GM12878 (cell line): ENCODE measurements at regions of chr7 and their contacts with region 1.

Region 1: DNA sequence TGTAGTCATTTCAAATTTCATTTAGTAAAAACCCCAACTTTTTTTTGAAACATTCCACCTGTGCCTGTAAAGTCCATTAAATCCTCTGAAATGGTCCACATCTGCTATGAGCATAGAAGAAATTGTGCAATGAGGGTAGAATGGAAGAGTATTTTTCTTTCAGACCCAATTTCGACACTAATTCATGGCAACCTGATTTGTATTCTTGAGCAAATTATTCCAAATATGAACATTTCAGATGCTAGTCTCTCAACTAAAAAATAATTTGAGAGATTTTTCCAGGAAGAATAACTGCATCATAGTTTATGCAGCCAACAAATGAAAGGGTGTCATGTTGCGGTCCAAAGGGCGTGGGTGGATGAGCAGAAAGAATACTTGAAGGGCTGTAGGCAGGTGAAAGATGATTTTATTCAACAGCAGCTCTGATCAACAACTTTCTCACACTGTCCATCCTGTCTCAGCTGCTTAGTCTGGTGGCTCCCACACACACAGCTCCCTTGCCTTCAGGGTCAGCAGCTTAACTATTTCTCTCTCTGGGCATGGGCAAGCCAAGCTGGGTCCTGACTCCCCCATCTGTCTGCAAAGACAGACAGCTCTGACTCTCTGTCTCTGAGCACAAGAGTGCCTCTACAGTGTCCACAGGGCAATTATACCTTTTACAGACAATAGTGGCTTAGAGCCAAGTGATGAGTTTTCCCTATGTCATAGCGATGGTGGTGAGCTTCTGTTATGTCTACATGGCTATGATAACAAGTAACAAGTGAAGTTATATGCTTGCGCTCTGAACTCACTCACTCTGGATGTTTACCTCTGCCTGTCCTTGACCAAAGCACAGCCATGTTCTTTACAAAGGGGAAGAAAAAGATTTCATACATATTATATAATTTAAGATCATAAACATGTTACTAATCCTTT is 11.5 kb downstream of the STEAP2 start:
- DNase-seq: no peak
- ATAC-seq: peak; percentile 75
- H3K4me3 ChIP-seq: no peak overlapping the region
- H3K27ac ChIP-seq: no peak overlapping the region
- H3K4me1 ChIP-seq: no peaks in the 10 kb centered on the region
- H3K27me3 ChIP-seq: no peaks in the 10 kb centered on the region
- CTCF ChIP-seq: no peak
- EP300 ChIP-seq: no peak
- POLR2A ChIP-seq: no peak
- RAD21 ChIP-seq: no peak

Region 2: DNA sequence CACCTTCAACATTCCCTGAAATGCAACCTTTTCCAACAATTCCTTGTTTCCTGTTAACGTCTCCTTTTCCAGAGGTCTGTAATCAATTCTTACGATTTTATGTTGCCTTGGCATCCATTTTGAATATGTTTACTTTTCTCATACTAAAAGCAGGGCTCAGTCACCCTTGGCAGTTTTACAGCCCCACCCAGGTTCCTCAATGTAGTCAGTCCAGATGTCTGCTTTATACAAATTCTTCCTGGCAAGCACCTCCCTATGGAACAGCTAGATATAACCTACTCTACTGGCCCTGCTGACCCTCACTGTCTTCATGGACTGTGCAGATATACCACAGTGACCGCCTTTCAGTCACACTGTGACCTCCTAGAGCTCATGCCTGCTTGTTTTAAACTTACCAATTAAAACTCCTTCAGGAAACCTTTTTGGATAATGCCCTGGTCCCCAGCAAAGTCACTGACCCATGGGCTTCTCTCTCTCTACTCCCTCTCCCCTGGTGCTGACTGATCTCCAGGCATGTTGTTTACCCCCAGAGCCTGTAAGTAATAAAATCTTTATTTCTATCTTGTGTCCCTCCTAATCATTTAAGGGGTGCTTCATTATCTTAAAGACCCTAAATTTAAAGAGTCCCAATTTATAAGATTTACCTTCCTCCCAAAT is 215.9 kb before region 1 on chr7:
- CTCF ChIA-PET with region 1: no interaction called
- POLR2A ChIA-PET with region 1: no interaction called
- RAD21 ChIA-PET with region 1: no interaction called
- SMC1A ChIA-PET with region 1: no interaction called
- in situ Hi-C with region 1: no loop called
- intact Hi-C with region 1: no loop called
- DNase-seq: no peak
- ATAC-seq: no peak
- H3K4me3 ChIP-seq: no peak overlapping the region
- H3K27ac ChIP-seq: no peak overlapping the region
- H3K4me1 ChIP-seq: no peaks in the 10 kb centered on the region
- H3K27me3 ChIP-seq: no peaks in the 10 kb centered on the region; a peak in 1 of 4 replicates
- CTCF ChIP-seq: no peak
- EP300 ChIP-seq: no peak
- POLR2A ChIP-seq: no peak
- RAD21 ChIP-seq: no peak

Region 3: GRCh38 chr7:90236721-90237289 is 13.7 kb after region 1 on chr7:
- CTCF ChIA-PET with region 1: interaction called, 24 read pairs
- POLR2A ChIA-PET with region 1: interaction called, 32 read pairs
- RAD21 ChIA-PET with region 1: interaction called, 38 read pairs
- SMC1A ChIA-PET with region 1: interaction called, 51 read pairs
- in situ Hi-C with region 1: no loop called
- intact Hi-C with region 1: no loop called
- DNase-seq: no peak
- ATAC-seq: no peak
- H3K4me3 ChIP-seq: no peak overlapping the region
- H3K27ac ChIP-seq: no peak overlapping the region
- H3K4me1 ChIP-seq: no peaks in the 10 kb centered on the region
- H3K27me3 ChIP-seq: no peaks in the 10 kb centered on the region
- CTCF ChIP-seq: no peak
- EP300 ChIP-seq: no peak
- POLR2A ChIP-seq: no peak
- RAD21 ChIP-seq: no peak